Gastrocnemius medialis (tissue), 4 donors: ENCODE measurements at regions of chr4 and their contacts with region 1.

Region 1: DNA sequence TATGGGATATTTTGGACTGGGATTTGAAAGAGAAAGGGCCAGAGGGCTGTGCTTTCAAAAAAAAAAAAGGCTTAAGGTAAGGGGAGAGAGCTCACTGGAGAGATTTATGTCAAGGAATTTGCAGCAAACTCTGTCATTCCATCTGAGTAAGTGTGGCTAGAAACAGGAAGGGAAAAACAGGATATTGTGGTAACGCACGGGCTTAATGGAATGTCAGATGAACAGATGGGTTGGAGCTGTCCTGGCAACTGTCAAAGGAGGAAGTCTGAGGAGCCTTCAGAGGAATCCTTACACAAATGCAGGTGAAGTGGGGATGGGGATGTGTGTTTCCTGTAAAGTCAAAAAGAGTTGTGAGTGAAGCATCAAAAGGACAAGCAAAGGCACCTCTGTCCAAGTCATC is 15.1 kb upstream of the NKX3-2 start:
- DNase-seq: no peak
- ATAC-seq: no peak
- H3K4me3 ChIP-seq: no peak overlapping the region
- H3K27ac ChIP-seq: no peak overlapping the region
- H3K4me1 ChIP-seq: no peaks in the 10 kb centered on the region
- H3K27me3 ChIP-seq: no peaks in the 10 kb centered on the region
- CTCF ChIP-seq: no peak
- POLR2A ChIP-seq: no peak

Region 2: GRCh38 chr4:12729384-12729783 is 830.0 kb before region 1 on chr4:
- in situ Hi-C with region 1: loop called in 2 of 4 experiments (anchors 25 kb)
- intact Hi-C with region 1: no loop called
- DNase-seq: no peak
- ATAC-seq: no peak
- H3K4me3 ChIP-seq: no peak overlapping the region
- H3K27ac ChIP-seq: no peak overlapping the region
- H3K4me1 ChIP-seq: no peaks in the 10 kb centered on the region
- H3K27me3 ChIP-seq: no peaks in the 10 kb centered on the region
- CTCF ChIP-seq: peak in 2 of 5 experiments; percentile 26 to 44
- POLR2A ChIP-seq: no peak

Region 3: DNA sequence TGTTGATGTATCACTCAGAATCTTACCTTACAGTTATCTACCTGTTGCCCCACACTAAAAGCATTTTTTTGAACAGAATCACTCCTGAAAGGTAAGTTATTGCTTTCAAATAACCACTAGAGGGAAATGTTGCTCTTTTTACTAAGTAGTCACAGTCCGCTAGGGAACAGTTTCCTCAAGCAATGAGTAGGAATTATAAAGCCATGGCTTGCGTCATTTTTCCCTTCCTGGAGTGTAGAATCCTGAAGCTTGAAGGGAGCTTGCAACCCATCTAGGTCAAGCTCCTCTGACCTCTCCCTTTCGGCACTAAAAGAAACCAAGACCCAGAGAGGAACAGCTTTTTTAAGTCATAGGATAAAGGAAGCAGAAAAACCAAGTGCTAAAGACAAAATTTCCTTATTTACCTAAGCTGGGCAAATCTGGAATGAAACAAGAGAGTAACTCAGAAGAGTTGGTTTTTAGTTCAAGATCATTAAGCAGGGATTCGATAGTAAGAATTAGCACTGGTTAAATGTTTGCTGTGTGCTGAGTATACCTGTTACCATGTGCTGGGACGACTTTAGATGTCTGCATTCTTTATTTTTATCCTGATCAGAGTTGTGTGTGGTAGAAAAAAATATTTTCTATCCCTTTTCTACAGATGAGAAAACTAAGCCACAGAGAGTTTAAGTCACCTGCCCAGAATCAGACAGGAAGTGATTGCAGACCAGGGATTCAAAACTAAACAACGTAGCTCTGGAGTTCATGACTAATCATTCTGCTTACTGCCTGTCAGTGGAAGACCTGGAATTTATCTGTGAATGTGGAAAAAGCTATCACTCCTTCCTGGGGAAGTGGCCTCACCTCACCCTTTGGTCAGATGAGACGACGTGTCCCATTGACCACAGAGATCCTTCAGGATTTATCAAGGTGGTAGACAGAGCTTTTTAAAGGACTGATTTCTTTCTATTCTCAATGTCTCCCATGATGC is 706.8 kb before region 1 on chr4:
- in situ Hi-C with region 1: loop called in 1 of 4 experiments (anchors 10 kb)
- intact Hi-C with region 1: no loop called
- DNase-seq: no peak
- ATAC-seq: no peak
- H3K4me3 ChIP-seq: no peak overlapping the region
- H3K27ac ChIP-seq: no peak overlapping the region
- H3K4me1 ChIP-seq: no peaks in the 10 kb centered on the region
- H3K27me3 ChIP-seq: peaks cover 0 to 6% (median 0%) of the 10 kb centered on the region in 3 donors
- CTCF ChIP-seq: peak in 4 of 5 experiments; percentile 13 to 50 (median 37)
- POLR2A ChIP-seq: no peak

Region 4: DNA sequence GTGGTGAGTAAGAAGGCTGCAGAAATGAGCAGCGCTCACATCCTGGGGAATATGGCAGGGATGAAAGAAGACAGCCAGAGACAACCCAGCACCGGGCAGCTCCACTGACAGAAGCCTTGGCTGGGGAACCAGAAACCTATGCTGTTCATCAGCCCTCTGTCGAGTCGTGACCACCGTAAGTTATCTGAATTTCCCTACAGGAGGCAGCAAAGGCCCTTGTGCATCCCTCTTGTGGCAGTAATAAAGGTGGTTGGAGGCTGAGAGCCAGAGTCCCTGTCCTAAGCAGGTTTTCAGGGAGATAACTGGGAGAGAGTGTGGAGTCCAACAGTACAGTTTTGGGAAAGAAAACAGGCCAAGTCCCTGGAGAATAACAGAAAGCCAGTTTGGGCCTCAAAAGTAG is 262.1 kb after region 1 on chr4:
- in situ Hi-C with region 1: no loop called
- intact Hi-C with region 1: no loop called
- DNase-seq: no peak
- ATAC-seq: no peak
- H3K4me3 ChIP-seq: no peak overlapping the region
- H3K27ac ChIP-seq: no peak overlapping the region
- H3K4me1 ChIP-seq: no peaks in the 10 kb centered on the region
- H3K27me3 ChIP-seq: no peaks in the 10 kb centered on the region
- CTCF ChIP-seq: no peak
- POLR2A ChIP-seq: no peak

Region 5: GRCh38 chr4:14184265-14184664 is 624.9 kb after region 1 on chr4:
- in situ Hi-C with region 1: no loop called
- intact Hi-C with region 1: no loop called
- DNase-seq: no peak
- ATAC-seq: no peak
- H3K4me3 ChIP-seq: no peak overlapping the region
- H3K27ac ChIP-seq: no peak overlapping the region
- H3K4me1 ChIP-seq: no peaks in the 10 kb centered on the region
- H3K27me3 ChIP-seq: no peaks in the 10 kb centered on the region
- CTCF ChIP-seq: no peak
- POLR2A ChIP-seq: no peak